ENCODE measurements at regions of chr20 and their contacts with region 1.

Region 1: GRCh38 chr20:31454365-31454764 is 13.9 kb downstream of the DEFB123 start:
- DNase-seq: no peak
- ATAC-seq: no peak
- H3K4me3 ChIP-seq: no peak overlapping the region
- H3K4me3 Mint-ChIP-seq: no peak overlapping the region
- H3K27ac ChIP-seq: no peak overlapping the region
- H3K27ac Mint-ChIP-seq: no peak overlapping the region
- H3K4me1 ChIP-seq: no peaks in the 10 kb centered on the region
- H3K4me1 Mint-ChIP-seq: no peaks in the 10 kb centered on the region
- H3K27me3 ChIP-seq: peaks cover 0 to 4% of the 10 kb centered on the region in 2 experiments
- H3K27me3 Mint-ChIP-seq: peaks cover 32% of the 10 kb centered on the region
- CTCF ChIP-seq: no peak

Region 2: DNA sequence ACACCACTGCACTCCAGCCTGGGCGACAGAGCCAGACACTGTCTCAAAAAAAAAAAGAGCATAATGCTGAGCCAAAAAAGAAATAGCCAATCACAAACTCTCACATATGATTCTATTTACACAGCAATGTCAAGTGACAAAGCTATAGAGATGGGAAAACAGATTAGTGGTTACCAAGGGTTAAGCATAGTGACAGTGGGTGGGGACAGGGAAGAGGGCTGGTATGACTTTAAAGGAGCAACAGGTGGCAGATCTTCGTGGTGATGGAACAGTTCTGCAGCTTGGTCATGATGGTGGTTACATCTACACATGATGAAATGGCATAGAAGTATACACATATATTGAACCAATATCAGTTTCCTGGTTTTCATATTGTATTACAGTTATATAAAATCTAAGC is 72.6 kb before region 1 on chr20:
- CTCF ChIA-PET with region 1: no interaction called
- POLR2A ChIA-PET with region 1: no interaction called
- intact Hi-C with region 1: no loop called
- DNase-seq: no peak
- ATAC-seq: no peak
- H3K4me3 ChIP-seq: no peak overlapping the region
- H3K4me3 Mint-ChIP-seq: no peak overlapping the region
- H3K27ac ChIP-seq: no peak overlapping the region
- H3K27ac Mint-ChIP-seq: no peak overlapping the region
- H3K4me1 ChIP-seq: no peaks in the 10 kb centered on the region
- H3K4me1 Mint-ChIP-seq: no peaks in the 10 kb centered on the region
- H3K27me3 ChIP-seq: no peaks in the 10 kb centered on the region
- H3K27me3 Mint-ChIP-seq: peaks cover 35% of the 10 kb centered on the region
- CTCF ChIP-seq: no peak

Region 3: DNA sequence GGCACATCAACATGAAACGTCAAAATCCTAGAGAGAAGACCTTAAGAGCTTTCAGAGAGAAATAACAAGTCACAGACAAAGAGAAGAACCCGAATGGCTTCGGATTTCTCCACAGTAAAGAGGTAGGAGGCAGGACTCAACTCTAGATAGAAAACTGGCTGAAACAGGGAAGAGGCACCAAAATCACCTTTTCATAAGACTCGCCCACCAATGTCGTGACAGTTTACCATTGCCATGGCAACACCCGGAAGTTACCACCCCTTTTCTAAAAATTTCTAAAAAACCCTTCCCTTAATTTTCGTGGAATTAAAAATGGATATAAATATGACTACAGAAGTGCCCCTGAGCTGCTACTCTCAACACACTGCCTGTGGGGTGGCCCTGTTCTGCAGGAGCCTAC is 36.1 kb before region 1 on chr20:
- CTCF ChIA-PET with region 1: no interaction called
- POLR2A ChIA-PET with region 1: no interaction called
- intact Hi-C with region 1: no loop called
- DNase-seq: no peak
- ATAC-seq: no peak
- H3K4me3 ChIP-seq: no peak overlapping the region
- H3K4me3 Mint-ChIP-seq: no peak overlapping the region
- H3K27ac ChIP-seq: no peak overlapping the region
- H3K27ac Mint-ChIP-seq: no peak overlapping the region
- H3K4me1 ChIP-seq: no peaks in the 10 kb centered on the region
- H3K4me1 Mint-ChIP-seq: no peaks in the 10 kb centered on the region
- H3K27me3 ChIP-seq: peaks cover 0 to 3% of the 10 kb centered on the region in 2 experiments
- H3K27me3 Mint-ChIP-seq: peaks cover 29% of the 10 kb centered on the region
- CTCF ChIP-seq: no peak

Region 4: DNA sequence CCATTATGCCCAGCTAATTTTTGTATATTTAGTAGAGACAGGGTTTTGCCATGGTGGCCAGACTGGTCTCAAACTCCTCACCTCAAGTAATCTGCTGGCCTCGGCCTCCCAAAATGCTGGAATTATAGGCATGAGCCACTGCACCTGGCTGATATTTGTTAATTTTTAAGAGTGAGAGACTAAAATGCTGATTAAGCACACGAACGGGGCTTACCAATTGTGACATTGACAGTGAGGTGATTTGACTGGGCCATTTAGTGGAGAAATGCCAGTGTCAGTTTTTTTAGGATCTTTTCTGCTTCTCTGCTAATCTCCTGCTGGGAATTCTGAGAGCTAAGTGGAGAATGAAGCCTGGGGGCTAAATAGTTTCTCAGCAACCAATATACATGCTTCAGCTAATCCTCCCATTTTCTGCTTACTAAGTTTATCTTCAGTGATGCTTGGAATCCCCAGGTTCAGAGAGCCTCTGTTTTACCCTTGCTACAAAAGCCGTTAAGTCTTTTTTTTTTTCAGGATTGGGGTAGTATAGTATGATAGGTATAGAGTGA is 23.7 kb before region 1 on chr20:
- CTCF ChIA-PET with region 1: no interaction called
- POLR2A ChIA-PET with region 1: no interaction called
- intact Hi-C with region 1: no loop called
- DNase-seq: no peak
- ATAC-seq: no peak
- H3K4me3 ChIP-seq: no peak overlapping the region
- H3K4me3 Mint-ChIP-seq: no peak overlapping the region
- H3K27ac ChIP-seq: no peak overlapping the region
- H3K27ac Mint-ChIP-seq: no peak overlapping the region
- H3K4me1 ChIP-seq: no peaks in the 10 kb centered on the region
- H3K4me1 Mint-ChIP-seq: no peaks in the 10 kb centered on the region
- H3K27me3 ChIP-seq: peaks cover 0 to 3% of the 10 kb centered on the region in 2 experiments
- H3K27me3 Mint-ChIP-seq: peaks cover 30% of the 10 kb centered on the region
- CTCF ChIP-seq: no peak

Region 5: DNA sequence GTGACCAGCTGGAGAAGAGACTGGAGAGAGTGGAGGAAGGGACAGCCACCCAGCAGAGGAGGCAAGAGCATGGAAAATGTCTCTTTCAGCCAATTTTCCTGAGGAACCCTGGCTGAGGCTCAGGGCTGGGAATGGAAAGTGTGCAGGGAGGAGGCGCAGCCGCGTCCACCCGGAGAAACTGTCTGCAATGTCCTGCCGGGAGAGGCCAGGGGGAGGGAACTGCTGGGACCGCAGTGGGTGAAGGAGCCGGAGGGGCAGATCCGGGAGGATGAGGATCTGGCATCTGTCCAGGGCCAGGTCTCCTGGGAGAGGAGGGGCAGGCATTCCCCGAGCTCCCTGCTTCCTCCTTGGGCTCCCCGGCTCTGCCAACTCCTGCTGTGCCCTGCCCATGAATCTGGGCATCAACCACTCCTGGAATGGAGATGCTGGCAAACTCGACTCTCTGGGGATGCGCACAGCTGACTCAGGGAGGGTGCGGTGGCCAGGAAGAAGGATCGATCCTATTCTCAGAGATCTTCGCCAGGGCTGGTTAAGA is 42.5 kb after region 1 on chr20:
- CTCF ChIA-PET with region 1: interaction called, 30 read pairs
- POLR2A ChIA-PET with region 1: no interaction called
- intact Hi-C with region 1: no loop called
- DNase-seq: no peak
- ATAC-seq: no peak
- H3K4me3 ChIP-seq: no peak overlapping the region
- H3K4me3 Mint-ChIP-seq: no peak overlapping the region
- H3K27ac ChIP-seq: no peak overlapping the region
- H3K27ac Mint-ChIP-seq: no peak overlapping the region
- H3K4me1 ChIP-seq: no peaks in the 10 kb centered on the region
- H3K4me1 Mint-ChIP-seq: no peaks in the 10 kb centered on the region
- H3K27me3 ChIP-seq: peaks cover 0 to 7% of the 10 kb centered on the region in 2 experiments
- H3K27me3 Mint-ChIP-seq: peaks cover 31% of the 10 kb centered on the region
- CTCF ChIP-seq: no peak

Region 6: DNA sequence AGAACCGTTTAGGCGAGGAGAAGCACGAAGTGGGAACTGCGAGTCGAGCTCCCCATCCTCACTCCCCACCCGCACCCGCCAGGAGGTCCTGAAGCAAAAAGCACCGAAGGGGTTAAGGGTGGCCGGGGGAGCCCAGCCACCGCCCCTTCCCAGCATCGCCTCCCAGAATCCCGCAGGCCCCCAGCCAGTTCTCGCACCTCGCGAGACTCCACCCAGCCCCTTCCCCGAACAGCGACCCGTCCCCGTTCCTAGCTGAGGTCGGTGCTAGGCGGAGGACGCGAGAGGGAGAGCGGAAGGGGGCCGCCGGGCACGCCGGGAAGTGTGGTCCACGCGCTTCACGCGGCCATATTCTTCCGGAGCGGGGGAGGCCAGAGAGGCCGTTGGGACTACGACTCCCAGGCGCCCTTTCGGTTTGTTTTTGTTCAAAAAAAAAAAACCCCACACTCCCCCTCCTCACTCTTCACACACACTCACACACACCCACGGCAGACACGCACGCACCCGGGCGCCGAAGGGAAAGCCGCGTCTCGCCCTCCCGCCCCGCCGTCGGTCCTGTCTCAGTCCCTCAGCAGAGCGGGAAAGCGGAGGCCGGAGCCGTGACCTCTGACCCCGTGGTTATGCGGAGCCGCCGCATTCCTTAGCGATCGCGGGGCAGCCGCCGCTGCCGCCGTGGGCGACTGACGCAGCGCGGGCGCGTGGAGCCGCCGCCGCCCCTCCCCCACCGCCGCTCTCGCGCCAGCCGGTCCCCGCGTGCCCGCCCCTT is 903.7 kb after region 1 on chr20 and contains the start of gene ASXL1:
- CTCF ChIA-PET with region 1: no interaction called
- POLR2A ChIA-PET with region 1: no interaction called
- intact Hi-C with region 1: no loop called
- DNase-seq: peak; percentile 87 to 97 (median 92)
- ATAC-seq: peak; percentile 91
- H3K4me3 ChIP-seq: peak within 1 kb of the TSS; percentile 95
- H3K4me3 Mint-ChIP-seq: peak within 1 kb of the TSS; percentile 96
- H3K27ac ChIP-seq: peak within 1 kb of the TSS; percentile 96 to 97
- H3K27ac Mint-ChIP-seq: peak within 1 kb of the TSS; percentile 99
- H3K4me1 ChIP-seq: peaks cover 38% of the 10 kb centered on the region
- H3K4me1 Mint-ChIP-seq: peaks cover 51% of the 10 kb centered on the region
- H3K27me3 ChIP-seq: no peaks in the 10 kb centered on the region
- H3K27me3 Mint-ChIP-seq: no peaks in the 10 kb centered on the region
- CTCF ChIP-seq: no peak
- total RNA-seq, gene ASXL1: 213 to 222 TPM